IMR-90 (cell line): ENCODE measurements at regions of chr4 and their contacts with region 1.

Region 1: GRCh38 chr4:182143822-182144625 is 99.2 kb upstream of the TENM3 start:
- DNase-seq: peak; percentile 83
- ATAC-seq: peak; percentile 75
- H3K4me3 ChIP-seq: peak overlapping the region; percentile 88
- H3K27ac ChIP-seq: peak overlapping the region; percentile 70
- H3K4me1 ChIP-seq: peaks cover 2% of the 10 kb centered on the region; the same call in 1 of the 2 replicates
- H3K27me3 ChIP-seq: no peaks in the 10 kb centered on the region
- CTCF ChIP-seq: no peak
- POLR2A ChIP-seq: peak; percentile 74
- RAD21 ChIP-seq: no peak; the same call in 1 of the 2 replicates

Region 2: GRCh38 chr4:181569553-181569952 is 574.5 kb before region 1 on chr4:
- CTCF ChIA-PET with region 1: no interaction called
- POLR2A ChIA-PET with region 1: no interaction called
- dilution Hi-C with region 1: no loop called
- in situ Hi-C with region 1: no loop called
- intact Hi-C with region 1: loop called (anchors 1 kb)
- DNase-seq: peak; percentile 65
- ATAC-seq: peak; percentile 92
- H3K4me3 ChIP-seq: no peak overlapping the region
- H3K27ac ChIP-seq: no peak overlapping the region
- H3K4me1 ChIP-seq: peaks cover 2% of the 10 kb centered on the region; the same call in 1 of the 2 replicates
- H3K27me3 ChIP-seq: no peaks in the 10 kb centered on the region
- CTCF ChIP-seq: peak; percentile 69
- POLR2A ChIP-seq: no peak
- RAD21 ChIP-seq: peak; percentile 79

Region 3: GRCh38 chr4:181911420-181911819 is 232.6 kb before region 1 on chr4:
- CTCF ChIA-PET with region 1: no interaction called
- POLR2A ChIA-PET with region 1: no interaction called
- dilution Hi-C with region 1: no loop called
- in situ Hi-C with region 1: no loop called
- intact Hi-C with region 1: loop called (anchors 5 kb)
- DNase-seq: peak; percentile 79
- ATAC-seq: peak; percentile 82
- H3K4me3 ChIP-seq: no peak overlapping the region
- H3K27ac ChIP-seq: no peak overlapping the region
- H3K4me1 ChIP-seq: no peaks in the 10 kb centered on the region; the same call in 1 of the 2 replicates
- H3K27me3 ChIP-seq: no peaks in the 10 kb centered on the region
- CTCF ChIP-seq: peak; percentile 20; the same call in 1 of the 2 replicates
- POLR2A ChIP-seq: no peak
- RAD21 ChIP-seq: peak; percentile 25

Region 4: GRCh38 chr4:182240161-182241130 is 96.4 kb after region 1 on chr4:
- CTCF ChIA-PET with region 1: no interaction called
- POLR2A ChIA-PET with region 1: no interaction called
- dilution Hi-C with region 1: no loop called
- in situ Hi-C with region 1: no loop called
- intact Hi-C with region 1: loop called (anchors 2 kb)
- DNase-seq: peak; percentile 89
- ATAC-seq: peak; percentile 73
- H3K4me3 ChIP-seq: no peak overlapping the region; the same call in 1 of the 2 replicates
- H3K27ac ChIP-seq: peak overlapping the region; percentile 69
- H3K4me1 ChIP-seq: peaks cover 19% of the 10 kb centered on the region
- H3K27me3 ChIP-seq: no peaks in the 10 kb centered on the region
- CTCF ChIP-seq: no peak
- POLR2A ChIP-seq: peak; percentile 20; the same call in 1 of the 2 replicates
- RAD21 ChIP-seq: no peak; the same call in 1 of the 2 replicates

Region 5: GRCh38 chr4:182448281-182449151 is 304.5 kb after region 1 on chr4:
- CTCF ChIA-PET with region 1: interaction called, 5 read pairs
- POLR2A ChIA-PET with region 1: no interaction called
- dilution Hi-C with region 1: no loop called
- in situ Hi-C with region 1: no loop called
- intact Hi-C with region 1: loop called (anchors 1 kb)
- DNase-seq: peak; percentile 93
- ATAC-seq: peak; percentile 98
- H3K4me3 ChIP-seq: peak overlapping the region; percentile 62
- H3K27ac ChIP-seq: peak overlapping the region; percentile 50
- H3K4me1 ChIP-seq: no peaks in the 10 kb centered on the region
- H3K27me3 ChIP-seq: no peaks in the 10 kb centered on the region
- CTCF ChIP-seq: no peak
- POLR2A ChIP-seq: peak; percentile 61; the same call in 1 of the 2 replicates
- RAD21 ChIP-seq: 0 out of 2 replicates have a peak, but pooled peaks have one; percentile 13

Region 6: DNA sequence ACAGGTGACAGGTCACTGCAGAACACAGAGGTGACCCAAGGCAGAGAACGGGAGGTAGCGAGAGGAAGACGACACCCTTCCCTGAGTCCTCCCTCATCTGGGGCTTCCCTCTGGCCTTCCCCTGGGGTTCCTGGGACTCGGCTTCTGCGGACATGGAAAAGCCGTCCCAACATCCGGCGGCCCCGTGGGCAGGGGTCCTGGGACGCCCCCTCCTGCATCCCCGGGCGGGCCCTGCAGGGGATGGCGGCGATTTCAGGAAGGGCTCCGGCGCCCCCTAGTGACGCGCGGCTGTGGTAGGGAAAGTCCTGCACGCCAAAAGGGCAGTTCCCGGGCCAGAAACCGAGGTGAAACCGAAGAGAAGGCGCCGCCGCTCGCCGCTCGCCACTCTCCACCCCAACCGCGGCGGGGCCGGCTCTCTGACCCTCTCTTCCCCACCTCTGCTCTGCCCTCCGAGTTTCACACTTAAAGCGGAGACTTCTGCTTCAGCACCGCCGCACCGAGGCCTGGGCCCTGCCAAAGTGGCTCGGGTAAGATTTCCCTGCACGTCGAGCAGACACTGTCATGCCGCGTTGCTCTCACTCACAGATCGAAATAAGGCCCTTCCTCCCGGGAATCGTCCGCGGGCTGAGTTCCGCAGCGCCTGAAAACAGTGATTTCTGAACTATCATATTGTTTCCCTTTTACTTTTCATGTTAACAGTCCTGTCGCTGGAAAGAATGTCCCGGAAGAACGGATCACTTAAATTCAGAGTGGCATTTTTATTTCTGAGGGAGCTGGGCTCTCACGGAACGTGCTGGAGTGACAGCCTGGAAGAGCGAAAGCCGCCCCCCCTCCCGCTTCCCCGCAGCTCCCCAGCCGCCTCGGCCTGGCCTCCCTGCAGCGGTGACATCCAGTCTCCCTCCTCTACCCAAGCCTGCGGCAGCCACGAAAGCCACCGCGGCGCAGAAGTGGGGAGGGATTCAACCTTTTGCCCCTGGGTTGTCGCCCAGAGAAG is 662.5 kb after region 1 on chr4:
- CTCF ChIA-PET with region 1: no interaction called
- POLR2A ChIA-PET with region 1: no interaction called
- dilution Hi-C with region 1: no loop called
- in situ Hi-C with region 1: no loop called
- intact Hi-C with region 1: loop called (anchors 1 kb)
- DNase-seq: peak; percentile 59
- ATAC-seq: peak; percentile 97
- H3K4me3 ChIP-seq: peak overlapping the region; percentile 46
- H3K27ac ChIP-seq: peak overlapping the region; percentile 53
- H3K4me1 ChIP-seq: no peaks in the 10 kb centered on the region
- H3K27me3 ChIP-seq: no peaks in the 10 kb centered on the region
- CTCF ChIP-seq: peak; percentile 95
- POLR2A ChIP-seq: 0 out of 2 replicates have a peak, but pooled peaks have one; percentile 47
- RAD21 ChIP-seq: peak; percentile 89